Activated T-helper 2 cell treated with anti-CD3 and anti-CD28 coated beads, Interferon-gamma antibody, Interleukin-2, Interleukin-4, amounts not matched to agents 10 μg/mL and 5 μg/mL and 100 μg/mL, durations not matched to agents 14 hours and 24 hours and 36 hours (primary cell): ENCODE measurements at regions of chr14 and their contacts with region 1.

Region 1: DNA sequence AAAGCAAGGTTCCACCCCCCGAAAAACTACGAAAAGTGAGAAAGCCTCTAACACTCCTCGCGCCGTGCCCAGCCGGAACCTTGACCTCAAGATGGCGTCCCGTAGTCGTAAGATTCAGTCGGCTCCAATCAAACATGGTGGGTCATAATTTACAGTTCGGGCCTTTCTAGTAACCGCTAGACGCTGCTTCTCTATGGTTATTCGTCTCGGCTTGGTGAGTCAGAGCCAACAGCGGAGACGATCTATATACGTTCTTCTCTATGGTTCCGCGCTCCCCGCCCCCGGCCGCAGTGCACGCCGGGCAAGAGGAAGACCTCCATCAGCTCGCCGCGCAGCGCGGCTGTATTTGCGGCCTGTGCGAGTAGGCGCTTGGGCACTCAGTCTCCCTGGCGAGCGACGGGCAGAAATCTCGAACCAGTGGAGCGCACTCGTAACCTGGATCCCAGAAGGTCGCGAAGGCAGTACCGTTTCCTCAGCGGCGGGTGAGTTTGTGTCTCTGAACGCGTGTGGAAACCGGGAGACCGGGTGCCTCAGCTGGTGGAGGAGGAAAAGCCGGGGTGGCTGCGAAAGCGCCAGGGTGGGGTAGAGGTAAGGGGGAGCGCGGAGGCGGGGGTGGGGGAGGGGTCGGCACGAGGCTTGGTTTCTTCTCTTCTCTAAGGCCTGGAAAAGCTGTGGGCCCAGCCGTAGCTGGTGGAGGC is at the start of gene RBM25:
- DNase-seq: peak; percentile 93
- H3K4me3 Mint-ChIP-seq: no peak within 1 kb of the TSS
- H3K27ac Mint-ChIP-seq: no peak within 1 kb of the TSS
- H3K4me1 Mint-ChIP-seq: peaks cover 22% of the 10 kb centered on the region
- H3K27me3 Mint-ChIP-seq: no peaks in the 10 kb centered on the region
- total RNA-seq, gene RBM25: 114 and 121 TPM in 2 replicates

Region 2: DNA sequence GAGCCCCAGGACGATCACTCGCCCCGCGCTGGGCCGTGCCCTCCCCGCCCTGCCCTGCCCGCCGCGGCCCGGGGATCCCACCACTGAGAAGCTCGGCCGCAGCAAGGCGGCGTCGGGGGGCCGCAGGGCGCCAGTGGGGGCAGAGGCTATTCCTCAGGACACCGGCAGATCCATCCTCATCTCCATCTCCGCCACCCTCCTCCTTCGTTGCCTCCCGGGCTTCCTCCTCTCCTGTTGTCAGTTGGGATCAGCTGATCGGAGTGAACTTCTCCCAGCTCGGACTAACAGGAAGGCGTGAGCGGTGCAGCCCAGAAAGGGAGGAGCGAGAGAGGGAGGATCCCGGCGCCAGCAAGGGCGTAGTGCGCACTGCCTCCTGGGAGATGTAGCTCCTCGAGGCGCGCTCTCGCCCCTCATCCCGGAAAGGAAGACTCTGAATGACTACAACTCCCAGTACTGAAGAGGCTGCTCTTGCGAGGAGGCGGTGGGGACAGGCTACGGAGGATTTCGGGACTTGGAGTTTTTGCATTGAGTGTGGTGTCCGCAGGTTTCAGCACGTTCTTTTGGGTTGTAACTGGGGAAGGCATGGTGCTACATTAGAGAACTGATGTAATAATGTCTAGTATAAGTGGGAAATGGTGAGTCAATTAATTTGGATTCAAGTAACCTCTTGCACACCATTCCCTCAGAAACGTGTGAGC is 31.4 kb before region 1 on chr14 and contains the start of gene ZFYVE1:
- intact Hi-C with region 1: loop called (anchors 1 kb)
- DNase-seq: peak; percentile 91
- H3K4me3 Mint-ChIP-seq: peak within 1 kb of the TSS; percentile 94
- H3K27ac Mint-ChIP-seq: peak within 1 kb of the TSS; percentile 86
- H3K4me1 Mint-ChIP-seq: peaks cover 33% of the 10 kb centered on the region
- H3K27me3 Mint-ChIP-seq: no peaks in the 10 kb centered on the region
- total RNA-seq, gene ZFYVE1: 8.3 and 9.8 TPM in 2 replicates

Region 3: DNA sequence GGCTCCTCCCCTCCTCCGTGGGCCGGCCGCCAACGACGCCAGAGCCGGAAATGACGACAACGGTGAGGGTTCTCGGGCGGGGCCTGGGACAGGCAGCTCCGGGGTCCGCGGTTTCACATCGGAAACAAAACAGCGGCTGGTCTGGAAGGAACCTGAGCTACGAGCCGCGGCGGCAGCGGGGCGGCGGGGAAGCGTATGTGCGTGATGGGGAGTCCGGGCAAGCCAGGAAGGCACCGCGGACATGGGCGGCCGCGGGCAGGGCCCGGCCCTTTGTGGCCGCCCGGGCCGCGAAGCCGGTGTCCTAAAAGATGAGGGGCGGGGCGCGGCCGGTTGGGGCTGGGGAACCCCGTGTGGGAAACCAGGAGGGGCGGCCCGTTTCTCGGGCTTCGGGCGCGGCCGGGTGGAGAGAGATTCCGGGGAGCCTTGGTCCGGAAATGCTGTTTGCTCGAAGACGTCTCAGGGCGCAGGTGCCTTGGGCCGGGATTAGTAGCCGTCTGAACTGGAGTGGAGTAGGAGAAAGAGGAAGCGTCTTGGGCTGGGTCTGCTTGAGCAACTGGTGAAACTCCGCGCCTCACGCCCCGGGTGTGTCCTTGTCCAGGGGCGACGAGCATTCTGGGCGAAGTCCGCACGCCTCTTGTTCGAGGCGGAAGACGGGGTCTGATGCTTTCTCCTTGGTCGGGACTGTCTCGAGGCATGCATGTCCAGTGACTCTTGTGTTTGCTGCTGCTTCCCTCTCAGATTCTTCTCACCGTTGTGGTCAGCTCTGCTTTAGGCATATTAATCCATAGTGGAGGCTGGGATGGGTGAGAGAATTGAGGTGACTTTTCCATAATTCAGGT is 78.2 kb after region 1 on chr14 and contains the start of gene PSEN1:
- intact Hi-C with region 1: loop called (anchors 1 kb)
- DNase-seq: peak; percentile 97
- H3K4me3 Mint-ChIP-seq: peak within 1 kb of the TSS; percentile 87
- H3K27ac Mint-ChIP-seq: peak within 1 kb of the TSS; percentile 98
- H3K4me1 Mint-ChIP-seq: peaks cover 16% of the 10 kb centered on the region
- H3K27me3 Mint-ChIP-seq: no peaks in the 10 kb centered on the region
- total RNA-seq, gene PSEN1: 34.7 and 36.5 TPM in 2 replicates

Region 4: DNA sequence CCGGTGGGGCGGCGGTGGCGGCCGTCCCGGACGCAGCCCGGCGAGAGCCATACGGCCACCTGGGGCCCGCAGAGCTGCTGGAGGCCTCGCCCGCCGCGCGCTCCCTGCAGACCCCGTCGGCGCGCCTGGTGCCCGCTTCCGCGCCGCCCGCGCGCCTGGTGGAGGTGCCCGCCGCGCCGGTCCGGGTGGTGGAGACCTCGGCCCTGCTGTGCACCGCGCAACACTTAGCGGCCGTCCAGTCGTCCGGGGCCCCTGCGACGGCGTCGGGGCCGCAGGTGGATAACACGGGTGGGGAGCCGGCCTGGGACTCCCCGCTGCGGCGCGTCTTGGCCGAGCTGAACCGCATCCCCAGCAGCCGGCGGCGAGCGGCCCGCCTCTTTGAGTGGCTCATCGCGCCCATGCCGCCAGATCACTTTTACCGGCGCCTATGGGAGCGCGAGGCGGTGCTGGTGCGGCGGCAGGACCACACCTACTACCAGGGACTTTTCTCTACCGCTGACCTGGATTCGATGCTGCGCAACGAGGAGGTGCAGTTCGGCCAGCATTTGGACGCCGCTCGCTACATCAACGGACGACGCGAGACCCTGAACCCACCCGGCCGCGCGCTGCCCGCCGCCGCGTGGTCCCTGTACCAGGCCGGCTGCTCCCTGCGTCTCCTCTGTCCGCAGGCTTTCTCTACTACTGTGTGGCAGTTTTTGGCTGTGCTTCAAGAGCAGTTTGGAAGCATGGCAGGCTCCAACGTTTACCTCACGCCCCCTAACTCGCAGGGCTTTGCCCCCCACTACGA is 433.1 kb after region 1 on chr14:
- intact Hi-C with region 1: loop called (anchors 1 kb)
- DNase-seq: peak; percentile 71
- H3K4me3 Mint-ChIP-seq: peak overlapping the region; percentile 84
- H3K27ac Mint-ChIP-seq: peak overlapping the region; percentile 76
- H3K4me1 Mint-ChIP-seq: peaks cover 29% of the 10 kb centered on the region
- H3K27me3 Mint-ChIP-seq: peaks cover 5% of the 10 kb centered on the region